Activated CD8-positive, alpha-beta T cell treated with anti-CD3 and anti-CD28 coated beads, Interleukin-2, amount 10 ng/mL, durations not matched to agents 7 days and 5 days (primary cell): ENCODE measurements at regions of chr14 and their contacts with region 1.

Region 1: DNA sequence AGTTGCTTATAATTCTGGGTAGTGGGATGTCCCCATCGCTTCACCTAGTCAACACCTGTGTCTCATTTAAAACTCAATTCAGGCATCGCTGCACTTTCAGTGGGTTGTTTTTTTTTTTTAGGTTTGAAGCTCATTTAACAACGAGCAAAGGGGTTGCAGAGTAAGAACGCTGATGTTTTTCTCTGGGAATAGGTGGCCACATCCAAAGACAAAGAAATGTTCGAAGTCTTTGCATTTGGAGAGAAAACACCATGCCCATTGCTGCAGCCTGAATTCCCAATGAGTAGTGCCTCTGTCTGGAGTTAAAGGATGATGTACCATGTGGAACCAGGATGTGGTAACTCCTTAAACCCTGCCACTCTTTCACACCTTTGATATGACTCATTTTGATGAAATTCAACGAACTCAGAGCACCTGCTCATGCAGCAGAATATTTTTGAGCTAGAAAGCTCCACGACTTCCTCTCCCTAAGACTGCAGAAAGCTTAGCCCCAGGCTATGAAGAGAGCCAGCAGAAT is 35.1 kb upstream of the BATF start:
- DNase-seq: peak; percentile 44
- ATAC-seq: peak; percentile 75
- H3K4me3 Mint-ChIP-seq: no peak overlapping the region
- H3K27ac Mint-ChIP-seq: peak overlapping the region; percentile 28
- H3K4me1 Mint-ChIP-seq: peaks cover 29% of the 10 kb centered on the region
- H3K27me3 Mint-ChIP-seq: peaks cover 2% of the 10 kb centered on the region

Region 2: GRCh38 chr14:75132382-75133086 is 354.7 kb before region 1 on chr14:
- CTCF ChIA-PET with region 1: interaction called, 12 read pairs
- POLR2A ChIA-PET with region 1: no interaction called
- DNase-seq: peak; percentile 77
- ATAC-seq: peak; percentile 77
- H3K4me3 Mint-ChIP-seq: no peak overlapping the region
- H3K27ac Mint-ChIP-seq: no peak overlapping the region
- H3K4me1 Mint-ChIP-seq: peaks cover 20% of the 10 kb centered on the region
- H3K27me3 Mint-ChIP-seq: no peaks in the 10 kb centered on the region

Region 3: DNA sequence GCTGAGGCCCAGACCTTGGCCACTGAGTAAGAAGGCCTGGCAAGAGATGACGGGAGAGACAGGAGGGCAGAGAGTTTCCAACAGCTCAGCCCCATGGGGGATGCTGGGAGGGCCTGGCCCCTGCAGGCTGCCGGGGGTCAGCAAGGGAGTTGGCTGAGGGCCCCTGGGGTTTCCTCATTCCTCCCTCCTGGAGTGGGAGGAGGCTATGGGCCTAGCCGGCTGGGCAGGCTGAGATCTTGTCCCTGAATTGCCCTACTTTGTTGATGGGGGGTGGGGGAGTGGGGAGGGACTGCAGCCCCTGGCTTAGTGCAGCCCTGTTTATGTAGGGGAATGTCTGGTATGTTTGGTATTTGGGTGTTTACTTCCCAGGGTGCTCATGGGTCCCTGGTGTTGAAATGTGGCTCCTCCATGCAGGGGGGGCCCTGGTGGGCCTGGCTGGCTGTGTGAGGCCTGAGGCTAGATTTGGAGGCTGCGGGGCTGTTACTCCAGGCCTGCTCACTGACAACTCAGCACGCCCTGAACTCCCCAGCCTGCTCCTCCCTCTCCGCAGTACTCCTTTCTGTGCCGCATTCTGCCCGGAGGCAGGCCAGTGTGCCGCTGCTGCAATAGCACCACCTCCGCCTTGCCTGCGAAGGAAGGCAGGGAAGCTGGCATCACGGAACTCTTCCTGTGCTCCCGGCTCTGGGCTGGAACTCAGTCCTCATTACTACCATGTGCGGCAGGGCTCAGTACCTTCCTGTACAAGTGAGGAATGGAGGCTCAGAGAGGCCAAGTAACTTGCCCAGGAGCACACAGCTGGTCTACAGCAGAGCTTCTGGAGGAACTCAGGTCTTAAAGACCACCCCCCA is 34.1 kb before region 1 on chr14:
- CTCF ChIA-PET with region 1: interaction called, 19 read pairs
- POLR2A ChIA-PET with region 1: no interaction called
- DNase-seq: no peak
- ATAC-seq: no peak
- H3K4me3 Mint-ChIP-seq: no peak overlapping the region
- H3K27ac Mint-ChIP-seq: peak overlapping the region; percentile 50
- H3K4me1 Mint-ChIP-seq: peaks cover 5% of the 10 kb centered on the region
- H3K27me3 Mint-ChIP-seq: peaks cover 10% of the 10 kb centered on the region

Region 4: DNA sequence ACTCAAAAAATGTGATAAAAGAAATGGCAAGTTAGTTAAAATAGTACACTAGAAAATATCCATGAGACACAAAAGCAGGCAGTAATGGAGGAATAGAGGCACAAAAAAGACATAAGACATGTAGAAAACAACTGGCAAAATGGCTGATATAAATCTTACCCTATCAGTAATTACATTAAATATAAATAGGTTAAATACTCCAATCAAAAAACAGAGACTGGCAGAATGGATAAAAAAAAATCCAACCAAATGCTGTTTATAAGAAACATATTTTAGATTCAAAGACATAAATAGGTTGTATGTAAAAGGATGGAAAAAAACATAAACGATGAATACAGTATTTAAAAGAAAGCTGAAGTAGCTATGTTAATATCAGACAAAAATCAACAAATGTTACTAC is 19.7 kb after region 1 on chr14:
- CTCF ChIA-PET with region 1: interaction called, 10 read pairs
- POLR2A ChIA-PET with region 1: no interaction called
- DNase-seq: no peak
- ATAC-seq: no peak
- H3K4me3 Mint-ChIP-seq: no peak overlapping the region
- H3K27ac Mint-ChIP-seq: no peak overlapping the region
- H3K4me1 Mint-ChIP-seq: no peaks in the 10 kb centered on the region
- H3K27me3 Mint-ChIP-seq: no peaks in the 10 kb centered on the region

Region 5: DNA sequence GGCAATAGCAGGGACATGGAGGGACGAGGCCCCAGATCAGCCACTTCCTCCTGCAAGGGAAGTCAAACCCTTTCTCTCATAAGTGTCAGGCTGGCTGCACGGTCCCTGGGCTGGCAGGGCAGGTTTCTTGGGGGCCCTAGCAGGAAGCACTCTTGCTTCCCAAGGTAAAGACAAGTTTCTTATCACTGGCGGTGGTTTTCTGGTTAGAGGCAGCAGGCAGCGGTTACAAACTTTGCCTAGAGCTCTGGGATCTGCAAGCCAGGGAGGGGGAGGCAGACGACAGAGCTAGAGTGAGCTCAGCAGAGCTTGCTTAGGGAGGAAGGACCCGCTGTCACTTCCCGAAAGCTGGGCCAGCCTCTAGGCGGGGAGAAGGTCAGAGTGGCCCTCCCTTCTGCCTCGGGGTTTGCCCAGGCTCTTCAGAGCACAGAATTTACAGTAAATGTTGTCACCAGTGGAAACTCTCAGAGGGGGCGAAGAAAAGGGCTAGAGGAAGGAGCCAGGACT is 55.4 kb after region 1 on chr14:
- CTCF ChIA-PET with region 1: interaction called, 10 read pairs
- POLR2A ChIA-PET with region 1: no interaction called
- DNase-seq: peak; percentile 77
- ATAC-seq: peak; percentile 86
- H3K4me3 Mint-ChIP-seq: peak overlapping the region; percentile 48
- H3K27ac Mint-ChIP-seq: peak overlapping the region; percentile 97
- H3K4me1 Mint-ChIP-seq: peaks cover 50% of the 10 kb centered on the region
- H3K27me3 Mint-ChIP-seq: no peaks in the 10 kb centered on the region

Region 6: DNA sequence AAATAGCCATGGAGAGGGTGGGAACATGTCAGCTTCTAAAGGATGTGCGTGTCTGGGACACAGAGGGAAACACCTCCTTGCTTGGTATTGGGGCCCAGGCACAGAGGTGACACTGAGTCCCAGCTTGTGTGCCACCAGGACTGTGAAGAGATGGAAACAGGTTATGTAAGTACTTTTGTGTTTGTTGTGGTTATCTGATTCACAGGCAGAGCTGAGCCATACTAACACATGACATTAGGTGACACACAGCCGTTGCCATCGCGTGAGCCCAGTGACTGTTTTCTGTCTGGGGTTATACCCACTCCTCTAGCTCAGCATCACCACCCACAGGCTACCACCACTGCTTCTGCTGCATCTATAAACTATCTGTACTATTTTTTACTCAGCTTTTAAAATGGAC is 79.1 kb after region 1 on chr14:
- CTCF ChIA-PET with region 1: interaction called, 45 read pairs
- POLR2A ChIA-PET with region 1: no interaction called
- DNase-seq: peak; percentile 78
- ATAC-seq: peak; percentile 95
- H3K4me3 Mint-ChIP-seq: no peak overlapping the region
- H3K27ac Mint-ChIP-seq: peak overlapping the region; percentile 48
- H3K4me1 Mint-ChIP-seq: peaks cover 49% of the 10 kb centered on the region
- H3K27me3 Mint-ChIP-seq: no peaks in the 10 kb centered on the region